Heart left ventricle (tissue), 16 donors: ENCODE measurements at regions of chr2 and their contacts with region 1.

Region 1: DNA sequence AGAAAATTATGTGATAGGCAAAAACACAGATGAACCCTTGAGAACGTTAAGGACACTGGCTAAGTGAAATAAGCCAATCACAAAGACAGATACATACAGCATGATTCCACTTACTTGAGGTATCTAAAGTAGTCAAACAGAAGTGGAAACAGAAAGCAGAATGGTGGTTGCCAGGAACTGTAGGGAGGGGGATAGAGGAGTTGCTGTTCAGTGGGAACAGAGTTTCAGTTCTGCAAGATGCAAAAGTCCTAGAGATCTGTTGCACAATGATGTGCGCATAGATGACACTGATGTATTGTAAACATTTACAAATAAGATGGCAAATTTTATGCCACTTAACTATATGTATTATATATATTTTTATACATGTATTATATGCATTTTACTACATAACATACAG is 59.7 kb downstream of the POLE4 start:
- DNase-seq: no peak
- ATAC-seq: peak in 1 of 4 donors; percentile 62
- H3K4me3 ChIP-seq: no peak overlapping the region
- H3K27ac ChIP-seq: no peak overlapping the region
- H3K4me1 ChIP-seq: peaks cover 0 to 9% (median 0%) of the 10 kb centered on the region in 12 donors
- H3K27me3 ChIP-seq: no peaks in the 10 kb centered on the region
- CTCF ChIP-seq: no peak
- POLR2A ChIP-seq: no peak

Region 2: DNA sequence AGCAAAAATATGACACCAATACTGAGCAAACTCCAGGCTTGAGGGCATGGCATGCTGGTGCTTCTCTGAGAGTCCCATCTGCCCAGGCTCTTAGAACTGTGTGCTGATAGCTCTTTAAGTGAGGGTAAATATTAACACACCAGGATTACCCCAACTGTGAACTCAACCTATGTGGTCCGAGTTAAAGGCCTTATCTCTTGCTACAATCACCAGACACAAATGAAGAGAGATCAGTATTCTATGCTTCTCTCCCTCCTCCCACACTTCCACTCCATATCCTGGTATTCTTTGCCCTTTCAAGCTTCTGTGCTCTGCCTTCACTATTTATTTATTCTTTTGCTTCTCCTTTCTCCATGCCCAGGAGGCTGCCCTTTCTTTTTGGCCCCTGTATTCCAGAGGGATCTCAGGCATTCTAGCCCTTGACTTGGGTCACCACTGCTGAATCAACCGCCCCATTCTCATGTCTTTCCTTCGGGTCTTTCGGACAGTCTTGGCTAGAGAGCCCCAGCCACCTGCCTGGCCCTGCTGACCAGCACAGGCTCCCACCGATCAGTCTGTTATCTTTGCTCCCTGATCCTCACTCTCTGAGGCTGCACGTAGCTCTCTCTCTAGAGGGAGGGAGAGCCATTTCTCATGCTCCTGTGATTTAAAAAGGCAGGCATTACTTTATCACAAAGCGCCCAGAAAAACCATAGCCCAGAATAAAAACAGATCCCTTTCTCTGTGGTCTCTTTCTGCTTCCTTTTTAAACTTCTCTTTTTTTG is 201.4 kb before region 1 on chr2:
- intact Hi-C with region 1: no loop called
- DNase-seq: no peak
- ATAC-seq: no peak
- H3K4me3 ChIP-seq: peak overlapping the region in 1 of 12 donors; percentile 5
- H3K27ac ChIP-seq: peak overlapping the region in 1 of 12 donors; percentile 83
- H3K4me1 ChIP-seq: peaks cover 0 to 22% (median 0%) of the 10 kb centered on the region in 12 donors
- H3K27me3 ChIP-seq: no peaks in the 10 kb centered on the region
- CTCF ChIP-seq: no peak
- POLR2A ChIP-seq: no peak

Region 3: GRCh38 chr2:75157430-75157829 is 139.3 kb after region 1 on chr2:
- intact Hi-C with region 1: loop called in 1 of 10 experiments (anchors 10 kb)
- DNase-seq: no peak
- ATAC-seq: no peak
- H3K4me3 ChIP-seq: no peak overlapping the region
- H3K27ac ChIP-seq: no peak overlapping the region
- H3K4me1 ChIP-seq: peaks cover 0 to 6% (median 0%) of the 10 kb centered on the region in 12 donors
- H3K27me3 ChIP-seq: no peaks in the 10 kb centered on the region
- CTCF ChIP-seq: peak in 6 of 12 donors; percentile 12 to 36 (median 21)
- POLR2A ChIP-seq: no peak